ENCODE measurements at regions of chr10 and their contacts with region 1.

Region 1: DNA sequence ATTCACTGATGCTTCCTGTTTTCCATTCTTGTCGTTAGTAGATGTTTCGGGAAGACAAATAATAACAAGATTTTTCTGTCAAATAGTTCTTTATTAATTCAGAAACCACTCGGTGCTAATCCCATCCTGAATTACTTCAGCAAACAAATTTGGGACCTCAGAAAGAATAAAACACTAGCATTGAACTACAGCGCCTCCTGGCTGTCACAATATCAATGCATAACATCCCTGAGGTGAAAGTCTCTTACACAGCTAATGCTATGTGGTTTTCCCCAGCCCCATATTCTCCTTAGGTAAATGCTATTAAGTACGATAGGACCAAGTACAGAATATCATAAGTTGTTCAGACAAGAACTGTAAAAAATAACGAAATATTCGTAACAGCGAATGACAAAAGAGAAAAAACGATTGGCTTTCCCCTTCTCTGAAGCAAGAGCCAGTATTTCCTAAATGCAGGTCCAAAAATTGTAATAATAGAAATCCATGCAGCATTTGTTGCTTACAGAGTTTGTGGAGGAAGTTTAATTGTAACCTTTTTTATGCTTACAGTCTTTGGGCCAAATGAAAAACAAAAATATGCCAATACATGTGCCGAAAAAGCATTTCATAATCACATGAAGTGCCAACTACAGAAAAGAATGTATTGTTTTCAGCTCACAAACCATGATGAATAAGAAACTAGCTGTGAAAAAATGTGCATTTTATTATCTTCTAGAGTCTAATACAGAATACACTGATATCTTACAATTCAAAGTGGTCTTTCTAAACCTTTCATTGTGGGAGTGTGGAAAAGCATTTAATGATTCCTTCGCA is 47.3 kb downstream of the MYPN start:
- DNase-seq: no peak
- ATAC-seq: peak; percentile 89
- H3K4me3 ChIP-seq: no peak overlapping the region
- H3K27ac ChIP-seq: no peak overlapping the region
- H3K4me1 ChIP-seq: no peaks in the 10 kb centered on the region
- H3K27me3 ChIP-seq: no peaks in the 10 kb centered on the region
- CTCF ChIP-seq: peak; percentile 75 to 87 (median 85)
- EP300 ChIP-seq: no peak
- POLR2A ChIP-seq: no peak
- RAD21 ChIP-seq: peak; percentile 91

Region 2: GRCh38 chr10:67520924-67521520 is 635.6 kb before region 1 on chr10:
- CTCF ChIA-PET with region 1: no interaction called
- POLR2A ChIA-PET with region 1: no interaction called
- RAD21 ChIA-PET with region 1: no interaction called
- SMC1A ChIA-PET with region 1: no interaction called
- in situ Hi-C with region 1: no loop called
- intact Hi-C with region 1: no loop called
- DNase-seq: peak; percentile 2
- ATAC-seq: peak; percentile 97
- H3K4me3 ChIP-seq: no peak overlapping the region
- H3K27ac ChIP-seq: no peak overlapping the region
- H3K4me1 ChIP-seq: no peaks in the 10 kb centered on the region
- H3K27me3 ChIP-seq: no peaks in the 10 kb centered on the region
- CTCF ChIP-seq: peak; percentile 65 to 85 (median 74)
- EP300 ChIP-seq: no peak
- POLR2A ChIP-seq: no peak
- RAD21 ChIP-seq: peak; percentile 89

Region 3: DNA sequence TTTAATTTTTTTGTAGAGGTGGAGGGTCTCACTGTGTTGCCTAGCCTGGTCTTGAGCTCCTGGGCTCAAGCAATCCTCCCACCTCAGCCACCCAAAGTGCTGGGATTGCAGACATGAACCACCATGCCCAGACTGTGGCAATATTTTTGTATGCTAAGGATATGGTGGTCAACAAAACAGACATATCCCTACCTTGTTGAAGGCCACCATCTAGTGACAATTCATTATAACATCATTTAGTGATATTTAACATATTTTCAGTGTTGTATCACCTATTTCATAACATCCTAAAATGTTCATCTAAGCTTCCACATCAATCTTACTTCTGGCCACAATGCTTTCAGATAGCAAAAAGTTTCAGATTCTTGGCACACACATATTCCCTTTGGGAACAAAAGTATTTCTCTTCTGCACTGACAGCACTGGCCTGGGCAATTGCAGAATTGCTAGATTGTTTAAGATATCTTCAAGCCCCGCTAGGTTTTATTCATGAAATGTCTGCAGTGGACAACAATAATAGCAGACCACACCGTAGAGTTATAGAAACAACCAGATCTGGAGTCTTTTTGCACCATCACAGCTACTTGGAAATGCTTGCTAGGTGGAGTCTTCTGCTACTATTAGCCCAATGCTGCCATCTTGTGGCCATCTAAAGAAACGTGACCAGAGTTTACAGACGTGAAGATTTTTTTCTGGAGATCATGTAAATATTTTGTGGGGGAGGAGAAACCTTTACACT is 376.9 kb before region 1 on chr10:
- CTCF ChIA-PET with region 1: interaction called, 11 read pairs
- POLR2A ChIA-PET with region 1: no interaction called
- RAD21 ChIA-PET with region 1: no interaction called
- SMC1A ChIA-PET with region 1: interaction called, 4 read pairs
- in situ Hi-C with region 1: no loop called
- intact Hi-C with region 1: no loop called
- DNase-seq: no peak
- ATAC-seq: peak; percentile 77
- H3K4me3 ChIP-seq: no peak overlapping the region
- H3K27ac ChIP-seq: no peak overlapping the region
- H3K4me1 ChIP-seq: peaks cover 38% of the 10 kb centered on the region
- H3K27me3 ChIP-seq: no peaks in the 10 kb centered on the region
- CTCF ChIP-seq: peak; percentile 65 to 88 (median 72); a peak in 5 of 6 replicates
- EP300 ChIP-seq: no peak
- POLR2A ChIP-seq: no peak
- RAD21 ChIP-seq: peak; percentile 96

Region 4: GRCh38 chr10:67849331-67850011 is 307.1 kb before region 1 on chr10:
- CTCF ChIA-PET with region 1: interaction called, 195 read pairs
- POLR2A ChIA-PET with region 1: no interaction called
- RAD21 ChIA-PET with region 1: interaction called, 113 read pairs
- SMC1A ChIA-PET with region 1: interaction called, 99 read pairs
- in situ Hi-C with region 1: loop called (anchors 5 kb)
- intact Hi-C with region 1: no loop called
- DNase-seq: peak; percentile 84
- ATAC-seq: peak; percentile 98
- H3K4me3 ChIP-seq: peak overlapping the region; percentile 82
- H3K27ac ChIP-seq: peak overlapping the region; percentile 98
- H3K4me1 ChIP-seq: no peaks in the 10 kb centered on the region
- H3K27me3 ChIP-seq: no peaks in the 10 kb centered on the region
- CTCF ChIP-seq: no peak
- EP300 ChIP-seq: no peak
- POLR2A ChIP-seq: peak; percentile 71
- RAD21 ChIP-seq: no peak

Region 5: DNA sequence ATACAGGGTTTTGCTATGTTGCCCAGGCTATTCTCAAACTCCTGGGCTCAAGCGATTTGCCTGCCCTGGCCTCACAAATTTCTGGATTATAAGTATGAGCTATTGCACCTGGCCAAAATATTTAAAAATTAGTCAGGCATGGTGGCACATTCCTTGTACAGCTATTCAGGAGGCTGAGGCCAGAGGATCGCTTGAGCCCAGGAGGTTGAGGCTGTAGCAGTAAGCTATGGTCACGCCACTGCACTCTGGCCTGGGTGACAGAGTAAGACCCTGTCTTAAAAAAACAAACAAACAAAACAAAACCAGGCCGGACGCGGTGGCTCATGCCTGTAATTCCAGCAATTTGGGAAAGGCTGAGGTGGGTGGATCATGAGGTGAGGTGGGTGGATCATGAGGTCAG is 286.6 kb before region 1 on chr10:
- CTCF ChIA-PET with region 1: interaction called, 15 read pairs
- POLR2A ChIA-PET with region 1: no interaction called
- RAD21 ChIA-PET with region 1: interaction called, 3 read pairs
- SMC1A ChIA-PET with region 1: interaction called, 5 read pairs
- in situ Hi-C with region 1: no loop called
- intact Hi-C with region 1: no loop called
- DNase-seq: no peak
- ATAC-seq: no peak
- H3K4me3 ChIP-seq: no peak overlapping the region
- H3K27ac ChIP-seq: no peak overlapping the region
- H3K4me1 ChIP-seq: no peaks in the 10 kb centered on the region; the same call in 1 of the 2 replicates
- H3K27me3 ChIP-seq: no peaks in the 10 kb centered on the region
- CTCF ChIP-seq: no peak
- EP300 ChIP-seq: no peak
- POLR2A ChIP-seq: no peak
- RAD21 ChIP-seq: no peak

Region 6: GRCh38 chr10:68082872-68083271 is 73.7 kb before region 1 on chr10:
- CTCF ChIA-PET with region 1: interaction called, 6 read pairs
- POLR2A ChIA-PET with region 1: no interaction called
- RAD21 ChIA-PET with region 1: interaction called, 6 read pairs
- SMC1A ChIA-PET with region 1: interaction called, 4 read pairs
- in situ Hi-C with region 1: no loop called
- intact Hi-C with region 1: loop called (anchors 5 kb)
- DNase-seq: no peak
- ATAC-seq: no peak
- H3K4me3 ChIP-seq: no peak overlapping the region
- H3K27ac ChIP-seq: no peak overlapping the region
- H3K4me1 ChIP-seq: no peaks in the 10 kb centered on the region
- H3K27me3 ChIP-seq: no peaks in the 10 kb centered on the region; a peak in 1 of 4 replicates
- CTCF ChIP-seq: peak in 1 of 3 experiments; percentile 6; a peak in 2 of 6 replicates
- EP300 ChIP-seq: no peak
- POLR2A ChIP-seq: no peak
- RAD21 ChIP-seq: peak; percentile 33; the same call in 1 of the 2 replicates

Region 7: GRCh38 chr10:68144709-68145108 is 11.9 kb before region 1 on chr10:
- CTCF ChIA-PET with region 1: interaction called, 28 read pairs
- POLR2A ChIA-PET with region 1: no interaction called
- RAD21 ChIA-PET with region 1: interaction called, 5 read pairs
- SMC1A ChIA-PET with region 1: no interaction called
- in situ Hi-C with region 1: no loop called
- intact Hi-C with region 1: no loop called
- DNase-seq: no peak
- ATAC-seq: no peak
- H3K4me3 ChIP-seq: no peak overlapping the region
- H3K27ac ChIP-seq: no peak overlapping the region
- H3K4me1 ChIP-seq: no peaks in the 10 kb centered on the region
- H3K27me3 ChIP-seq: no peaks in the 10 kb centered on the region; a peak in 1 of 4 replicates
- CTCF ChIP-seq: no peak
- EP300 ChIP-seq: no peak
- POLR2A ChIP-seq: no peak
- RAD21 ChIP-seq: no peak

Region 8: DNA sequence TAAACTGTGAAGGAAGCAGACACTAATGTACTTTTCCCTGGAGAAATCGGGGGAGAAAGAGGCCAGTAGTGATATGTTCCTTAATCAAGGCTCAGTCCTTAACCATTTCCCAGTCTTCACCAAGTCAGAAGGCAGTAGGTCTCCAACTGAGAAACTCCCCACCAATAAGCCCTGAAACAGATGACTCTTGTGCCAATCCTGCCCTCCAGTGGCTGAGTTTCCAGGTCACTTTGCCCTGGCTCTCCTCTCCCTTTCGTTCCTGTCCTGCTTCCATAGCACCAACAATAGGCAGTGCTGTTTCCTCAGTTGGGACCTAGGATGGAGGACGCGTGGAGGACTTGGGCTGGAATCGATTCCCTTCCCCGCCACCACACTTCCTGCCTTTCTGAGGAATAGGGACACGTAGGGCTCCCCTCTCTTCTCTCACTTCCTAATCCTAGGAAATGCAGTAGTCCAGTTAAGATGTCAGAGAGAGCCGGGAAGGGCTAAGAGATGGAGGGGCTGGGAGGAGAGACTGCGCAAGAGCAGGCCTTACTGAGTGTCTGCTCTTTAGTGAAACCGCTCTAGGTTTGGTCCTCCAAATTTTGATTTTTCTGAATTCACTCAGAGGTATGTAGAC is 52.0 kb after region 1 on chr10:
- CTCF ChIA-PET with region 1: interaction called, 17 read pairs
- POLR2A ChIA-PET with region 1: no interaction called
- RAD21 ChIA-PET with region 1: interaction called, 7 read pairs
- SMC1A ChIA-PET with region 1: interaction called, 13 read pairs
- in situ Hi-C with region 1: no loop called
- intact Hi-C with region 1: no loop called
- DNase-seq: peak; percentile 20
- ATAC-seq: peak; percentile 89
- H3K4me3 ChIP-seq: no peak overlapping the region
- H3K27ac ChIP-seq: no peak overlapping the region
- H3K4me1 ChIP-seq: no peaks in the 10 kb centered on the region; the same call in 1 of the 2 replicates
- H3K27me3 ChIP-seq: no peaks in the 10 kb centered on the region
- CTCF ChIP-seq: peak; percentile 56 to 73 (median 58)
- EP300 ChIP-seq: no peak
- POLR2A ChIP-seq: no peak
- RAD21 ChIP-seq: peak; percentile 63

Region 9: GRCh38 chr10:68222391-68222790 is 65.8 kb after region 1 on chr10:
- CTCF ChIA-PET with region 1: no interaction called
- POLR2A ChIA-PET with region 1: no interaction called
- RAD21 ChIA-PET with region 1: no interaction called
- SMC1A ChIA-PET with region 1: no interaction called
- in situ Hi-C with region 1: no loop called
- intact Hi-C with region 1: no loop called
- DNase-seq: no peak
- ATAC-seq: no peak
- H3K4me3 ChIP-seq: no peak overlapping the region
- H3K27ac ChIP-seq: no peak overlapping the region
- H3K4me1 ChIP-seq: no peaks in the 10 kb centered on the region
- H3K27me3 ChIP-seq: no peaks in the 10 kb centered on the region
- CTCF ChIP-seq: no peak
- EP300 ChIP-seq: no peak
- POLR2A ChIP-seq: no peak
- RAD21 ChIP-seq: no peak

Region 10: DNA sequence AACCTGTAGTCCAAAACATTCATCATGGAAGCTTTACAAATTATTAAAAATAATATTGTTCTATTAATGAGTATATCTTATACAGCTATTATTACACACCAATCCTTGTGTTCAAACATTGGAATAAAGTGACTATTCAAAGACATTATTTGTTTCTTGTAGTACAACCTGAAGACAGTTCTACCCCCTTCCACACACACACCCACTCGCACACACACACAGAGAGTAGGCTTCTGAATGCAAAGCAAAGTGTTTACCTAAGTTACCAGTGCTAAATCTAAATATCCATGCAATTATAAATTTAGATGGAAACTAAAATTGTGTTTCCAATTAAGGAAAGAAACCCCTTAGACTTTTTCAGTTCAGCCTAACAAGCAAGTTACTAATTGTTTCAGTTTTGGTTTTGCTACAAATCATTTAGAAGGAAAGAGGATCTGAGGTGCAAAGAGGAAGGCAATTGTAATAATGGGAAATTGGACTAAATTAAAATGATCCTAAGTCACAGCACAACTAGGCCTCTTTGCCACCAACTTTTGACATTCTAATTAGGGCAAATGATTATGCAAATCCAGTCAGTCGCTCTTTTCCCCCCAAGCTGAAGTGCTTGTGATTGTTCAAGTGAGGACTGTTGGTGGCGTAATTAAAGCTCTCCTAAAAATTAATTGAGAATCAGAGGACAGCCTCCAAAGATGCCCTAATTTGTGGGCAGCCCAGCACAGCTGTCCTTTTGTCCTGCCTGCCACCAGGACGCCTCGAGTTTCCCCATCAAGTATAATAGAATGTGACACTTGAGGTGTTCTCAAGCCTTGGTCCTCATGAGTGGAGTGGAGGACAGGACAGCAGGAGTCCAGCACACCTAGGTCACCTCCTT is 95.3 kb after region 1 on chr10:
- CTCF ChIA-PET with region 1: no interaction called
- POLR2A ChIA-PET with region 1: no interaction called
- RAD21 ChIA-PET with region 1: no interaction called
- SMC1A ChIA-PET with region 1: no interaction called
- in situ Hi-C with region 1: no loop called
- intact Hi-C with region 1: no loop called
- DNase-seq: peak; percentile 24
- ATAC-seq: peak; percentile 61
- H3K4me3 ChIP-seq: peak overlapping the region; percentile 20; the same call in 1 of the 2 replicates
- H3K27ac ChIP-seq: no peak overlapping the region
- H3K4me1 ChIP-seq: peaks cover 7% of the 10 kb centered on the region
- H3K27me3 ChIP-seq: no peaks in the 10 kb centered on the region
- CTCF ChIP-seq: no peak
- EP300 ChIP-seq: 0 out of 4 replicates have a peak, but pooled peaks of 1 of the 2 experiments have one; percentile 7
- POLR2A ChIP-seq: no peak
- RAD21 ChIP-seq: no peak

Region 11: GRCh38 chr10:68781613-68782574 is 625.3 kb after region 1 on chr10:
- CTCF ChIA-PET with region 1: no interaction called
- POLR2A ChIA-PET with region 1: no interaction called
- RAD21 ChIA-PET with region 1: no interaction called
- SMC1A ChIA-PET with region 1: no interaction called
- in situ Hi-C with region 1: no loop called
- intact Hi-C with region 1: no loop called
- DNase-seq: no peak
- ATAC-seq: no peak; the same call in 1 of the 3 replicates
- H3K4me3 ChIP-seq: no peak overlapping the region
- H3K27ac ChIP-seq: no peak overlapping the region
- H3K4me1 ChIP-seq: 0 out of 2 replicates have a peak, but pooled peaks cover 6% of the 10 kb centered on the region
- H3K27me3 ChIP-seq: no peaks in the 10 kb centered on the region
- CTCF ChIP-seq: no peak
- EP300 ChIP-seq: no peak
- POLR2A ChIP-seq: no peak
- RAD21 ChIP-seq: no peak

Measured in GM12878 (cell line).